ENCODE measurements at regions of chr15 and their contacts with region 1.

Region 1: DNA sequence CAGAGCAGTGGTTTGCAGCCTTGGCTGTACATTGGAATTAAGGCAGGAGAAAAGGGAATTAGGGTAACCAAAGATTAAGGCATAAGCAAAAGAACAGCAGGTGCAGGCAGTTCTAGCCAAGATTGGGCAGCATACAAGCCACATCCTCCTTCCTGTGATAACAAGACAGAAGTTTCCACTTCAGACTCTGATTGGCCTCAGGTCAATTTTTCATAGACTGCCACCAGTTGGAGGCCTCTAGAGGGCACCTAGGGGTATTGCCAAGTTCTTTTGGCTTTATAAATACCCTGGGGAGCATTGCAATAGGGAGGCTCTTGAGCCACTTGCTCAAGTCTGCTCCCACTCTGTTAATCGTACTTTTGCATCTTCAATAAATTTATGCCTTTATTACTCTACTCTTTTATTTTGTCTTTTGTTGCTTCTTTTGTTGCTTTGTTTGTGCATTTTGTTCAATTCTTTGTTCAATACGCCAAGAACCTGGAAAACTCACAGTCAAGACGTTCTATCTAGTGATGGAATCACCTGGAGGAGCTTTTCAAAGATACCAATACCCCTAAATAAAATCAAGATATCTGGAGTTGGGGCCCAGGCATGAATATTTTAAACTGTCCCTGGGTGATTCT is 32.2 kb upstream of the FMN1 start:
- DNase-seq: peak; percentile 2
- H3K4me3 Mint-ChIP-seq: no peak overlapping the region
- H3K27ac Mint-ChIP-seq: no peak overlapping the region
- H3K4me1 Mint-ChIP-seq: no peaks in the 10 kb centered on the region
- H3K27me3 Mint-ChIP-seq: peaks cover 6% of the 10 kb centered on the region

Region 2: DNA sequence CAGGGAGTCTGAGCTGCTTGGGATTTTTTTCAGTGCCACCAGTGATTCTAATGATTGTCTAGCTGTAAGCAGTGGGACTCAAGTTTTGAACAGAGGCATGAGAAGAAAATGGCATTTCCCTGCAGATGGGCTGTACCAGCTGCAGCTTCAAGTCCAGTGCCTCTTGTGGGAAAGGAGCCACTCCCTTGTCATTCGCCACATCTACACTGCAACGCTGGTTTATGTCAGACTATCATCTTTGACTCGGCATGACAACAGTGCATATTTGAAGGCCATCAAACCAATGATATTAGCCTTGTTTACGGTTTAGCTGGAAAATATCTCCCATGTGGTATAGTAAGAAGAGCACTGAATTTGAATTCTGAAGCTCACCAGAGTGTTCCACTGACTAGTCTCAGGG is 563.0 kb before region 1 on chr15:
- intact Hi-C with region 1: loop called (anchors 2 kb)
- DNase-seq: no peak
- H3K4me3 Mint-ChIP-seq: no peak overlapping the region
- H3K27ac Mint-ChIP-seq: no peak overlapping the region
- H3K4me1 Mint-ChIP-seq: peaks cover 6% of the 10 kb centered on the region
- H3K27me3 Mint-ChIP-seq: no peaks in the 10 kb centered on the region

Region 3: GRCh38 chr15:33309602-33310276 is 83.1 kb after region 1 on chr15:
- intact Hi-C with region 1: no loop called
- DNase-seq: no peak
- H3K4me3 Mint-ChIP-seq: no peak overlapping the region
- H3K27ac Mint-ChIP-seq: no peak overlapping the region
- H3K4me1 Mint-ChIP-seq: no peaks in the 10 kb centered on the region
- H3K27me3 Mint-ChIP-seq: peaks cover 44% of the 10 kb centered on the region

Region 4: GRCh38 chr15:33490703-33491102 is 264.0 kb after region 1 on chr15:
- intact Hi-C with region 1: no loop called
- DNase-seq: no peak
- H3K4me3 Mint-ChIP-seq: no peak overlapping the region
- H3K27ac Mint-ChIP-seq: no peak overlapping the region
- H3K4me1 Mint-ChIP-seq: no peaks in the 10 kb centered on the region
- H3K27me3 Mint-ChIP-seq: no peaks in the 10 kb centered on the region

Measured in activated T-helper 1 cell treated with anti-CD3 and anti-CD28 coated beads, Interleukin-12 subunit alpha, Interleukin-12 subunit beta, Interleukin-2, Interleukin-4 antibody, amounts not matched to agents 30 ng/mL and 10 ng/mL and 1 ng/mL, durations not matched to agents 14 hours and 24 hours and 36 hours (primary cell).